Endothelial cell of umbilical vein (primary cell): ENCODE measurements at regions of chr2 and their contacts with region 1.

Region 1: GRCh38 chr2:10141736-10142642 is 19.4 kb downstream of the RRM2 start:
- DNase-seq: no peak
- H3K4me3 ChIP-seq: no peak overlapping the region
- H3K27ac ChIP-seq: no peak overlapping the region
- H3K4me1 ChIP-seq: no peaks in the 10 kb centered on the region
- H3K27me3 ChIP-seq: no peaks in the 10 kb centered on the region
- CTCF ChIP-seq: peak; percentile 50 to 65
- POLR2A ChIP-seq: no peak

Region 2: GRCh38 chr2:10157293-10157692 is 15.3 kb after region 1 on chr2:
- CTCF ChIA-PET with region 1: interaction called, 10 read pairs
- POLR2A ChIA-PET with region 1: no interaction called
- dilution Hi-C with region 1: no loop called
- intact Hi-C with region 1: no loop called
- DNase-seq: no peak
- H3K4me3 ChIP-seq: no peak overlapping the region
- H3K27ac ChIP-seq: no peak overlapping the region
- H3K4me1 ChIP-seq: peaks cover 33% of the 10 kb centered on the region
- H3K27me3 ChIP-seq: no peaks in the 10 kb centered on the region
- CTCF ChIP-seq: no peak
- POLR2A ChIP-seq: no peak

Region 3: DNA sequence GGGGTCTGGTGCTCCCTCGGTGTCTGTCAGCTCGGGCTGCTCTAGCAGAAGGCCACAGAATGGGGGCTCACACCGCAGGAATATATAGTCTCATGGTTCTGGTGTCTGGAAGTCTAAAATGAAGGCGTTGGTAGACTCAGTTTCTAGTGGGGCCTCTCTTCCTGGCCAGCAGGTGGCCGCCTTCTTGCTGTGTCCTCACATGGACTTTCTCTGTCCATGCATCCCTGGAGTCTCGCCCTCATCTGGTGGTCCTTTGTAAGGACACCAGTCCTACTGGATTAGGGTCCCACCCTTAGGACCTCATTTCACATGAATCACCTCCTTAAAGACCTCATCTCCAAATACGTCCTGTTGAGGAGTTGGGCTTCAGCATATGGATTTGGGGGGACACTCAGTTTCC is 46.2 kb after region 1 on chr2:
- CTCF ChIA-PET with region 1: no interaction called
- POLR2A ChIA-PET with region 1: no interaction called
- dilution Hi-C with region 1: no loop called
- intact Hi-C with region 1: no loop called
- DNase-seq: peak; percentile 33
- H3K4me3 ChIP-seq: no peak overlapping the region
- H3K27ac ChIP-seq: no peak overlapping the region
- H3K4me1 ChIP-seq: no peaks in the 10 kb centered on the region
- H3K27me3 ChIP-seq: no peaks in the 10 kb centered on the region
- CTCF ChIP-seq: peak; percentile 52 to 66
- POLR2A ChIP-seq: no peak

Region 4: GRCh38 chr2:10242998-10243925 is 101.3 kb after region 1 on chr2:
- CTCF ChIA-PET with region 1: no interaction called
- POLR2A ChIA-PET with region 1: no interaction called
- dilution Hi-C with region 1: no loop called
- intact Hi-C with region 1: no loop called
- DNase-seq: no peak
- H3K4me3 ChIP-seq: no peak overlapping the region
- H3K27ac ChIP-seq: no peak overlapping the region
- H3K4me1 ChIP-seq: no peaks in the 10 kb centered on the region
- H3K27me3 ChIP-seq: peaks cover 0 to 5% of the 10 kb centered on the region in 2 experiments
- CTCF ChIP-seq: no peak
- POLR2A ChIP-seq: no peak

Region 5: GRCh38 chr2:10668402-10669012 is 526.5 kb after region 1 on chr2:
- CTCF ChIA-PET with region 1: no interaction called
- POLR2A ChIA-PET with region 1: no interaction called
- dilution Hi-C with region 1: no loop called
- intact Hi-C with region 1: loop called (anchors 5 kb)
- DNase-seq: peak; percentile 82
- H3K4me3 ChIP-seq: no peak overlapping the region
- H3K27ac ChIP-seq: no peak overlapping the region
- H3K4me1 ChIP-seq: no peaks in the 10 kb centered on the region
- H3K27me3 ChIP-seq: no peaks in the 10 kb centered on the region
- CTCF ChIP-seq: peak; percentile 32 to 39
- POLR2A ChIP-seq: no peak